ENCODE measurements at regions of chr7 and their contacts with region 1.

Region 1: GRCh38 chr7:130615583-130615982 is 53.0 kb downstream of the COPG2 start:
- DNase-seq: no peak
- H3K4me3 ChIP-seq: no peak overlapping the region
- H3K27ac ChIP-seq: no peak overlapping the region
- H3K4me1 ChIP-seq: no peaks in the 10 kb centered on the region
- H3K27me3 ChIP-seq: no peaks in the 10 kb centered on the region
- CTCF ChIP-seq: no peak

Region 2: DNA sequence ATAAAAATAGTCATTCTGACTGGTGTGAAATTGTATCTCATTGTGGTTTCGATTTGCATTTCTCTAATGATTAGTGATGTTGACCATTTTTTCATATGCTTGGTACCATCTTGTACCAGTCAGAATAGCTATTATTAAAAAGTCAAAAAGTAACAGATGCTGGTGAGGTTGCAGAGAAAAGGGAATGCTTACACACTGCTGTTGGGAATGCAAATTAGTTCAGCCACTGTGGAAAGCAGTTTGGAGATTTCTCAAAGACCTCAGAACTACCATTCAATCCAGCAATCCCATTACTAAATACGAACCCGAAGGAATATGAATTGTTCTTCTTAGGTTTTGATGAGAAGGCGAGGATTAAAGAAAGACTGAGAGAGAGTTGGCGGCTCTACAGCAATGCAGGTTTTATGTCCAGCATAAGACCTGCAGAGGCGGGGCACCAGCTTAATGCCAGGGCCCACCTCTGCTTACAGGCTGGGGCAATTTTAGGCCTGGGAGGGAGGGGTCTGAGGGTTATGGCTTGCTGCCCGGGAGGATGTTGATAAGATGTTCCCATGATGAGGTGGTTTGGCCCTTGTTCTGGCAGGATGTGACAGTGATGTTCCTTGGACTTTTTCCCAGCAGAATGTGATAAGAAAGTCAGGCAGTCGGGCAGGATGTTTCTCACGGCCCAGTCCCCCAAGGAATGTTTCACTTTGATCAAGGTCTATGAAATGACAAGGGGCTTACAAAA is 49.2 kb before region 1 on chr7:
- CTCF ChIA-PET with region 1: interaction called, 10 read pairs
- POLR2A ChIA-PET with region 1: no interaction called
- intact Hi-C with region 1: no loop called
- DNase-seq: no peak
- H3K4me3 ChIP-seq: no peak overlapping the region
- H3K27ac ChIP-seq: no peak overlapping the region
- H3K4me1 ChIP-seq: no peaks in the 10 kb centered on the region
- H3K27me3 ChIP-seq: no peaks in the 10 kb centered on the region
- CTCF ChIP-seq: no peak

Measured in PC-9 (cell line).